ENCODE measurements at regions of chr6 and their contacts with region 1.

Region 1: DNA sequence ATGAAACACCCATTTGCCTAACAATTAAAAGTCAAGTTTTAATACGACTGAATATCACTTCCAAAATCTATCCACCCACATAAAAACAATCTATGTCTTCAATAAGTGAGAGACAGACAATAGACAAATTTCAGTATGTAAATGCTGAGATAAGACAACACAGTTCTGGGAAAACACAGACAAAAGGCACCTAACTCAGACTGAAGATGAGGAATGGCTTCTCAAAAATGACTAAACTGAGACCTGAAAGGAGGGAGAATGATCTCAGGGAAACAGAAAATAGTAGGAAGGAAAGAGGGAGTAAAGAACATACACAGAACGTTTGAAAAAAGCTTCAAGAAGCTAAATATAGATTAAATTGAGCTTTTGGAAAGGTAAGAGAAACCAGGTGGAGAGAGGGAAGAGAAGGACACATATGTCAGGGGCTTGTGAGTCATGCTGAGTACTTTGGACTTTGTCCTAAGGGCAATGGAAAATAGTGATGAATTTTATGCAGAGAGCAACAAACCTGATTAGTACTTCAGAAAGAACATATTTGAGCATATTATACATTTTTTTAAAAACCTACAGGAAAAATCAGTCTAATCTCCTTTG is 16.1 kb downstream of the LMBRD1 start:
- DNase-seq: peak; percentile 28
- H3K4me3 Mint-ChIP-seq: peak overlapping the region; percentile 1
- H3K27ac Mint-ChIP-seq: peak overlapping the region; percentile 15
- H3K4me1 Mint-ChIP-seq: peaks cover 23% of the 10 kb centered on the region
- H3K27me3 Mint-ChIP-seq: no peaks in the 10 kb centered on the region
- CTCF ChIP-seq: no peak

Region 2: GRCh38 chr6:69719602-69720193 is 61.0 kb before region 1 on chr6:
- CTCF ChIA-PET with region 1: no interaction called
- intact Hi-C with region 1: no loop called
- DNase-seq: peak; percentile 41
- H3K4me3 Mint-ChIP-seq: no peak overlapping the region
- H3K27ac Mint-ChIP-seq: no peak overlapping the region
- H3K4me1 Mint-ChIP-seq: no peaks in the 10 kb centered on the region
- H3K27me3 Mint-ChIP-seq: no peaks in the 10 kb centered on the region
- CTCF ChIP-seq: peak; percentile 44

Region 3: GRCh38 chr6:69796642-69797390 is 16.1 kb after region 1 on chr6 and contains the start of gene LMBRD1:
- CTCF ChIA-PET with region 1: interaction called, 14 read pairs
- intact Hi-C with region 1: no loop called
- DNase-seq: peak; percentile 99
- H3K4me3 Mint-ChIP-seq: peak within 1 kb of the TSS; percentile 97
- H3K27ac Mint-ChIP-seq: peak within 1 kb of the TSS; percentile 99
- H3K4me1 Mint-ChIP-seq: peaks cover 35% of the 10 kb centered on the region
- H3K27me3 Mint-ChIP-seq: no peaks in the 10 kb centered on the region
- CTCF ChIP-seq: peak; percentile 95
- total RNA-seq, gene LMBRD1: 35.7 and 36.6 TPM in 2 replicates